Activated CD4-positive, alpha-beta memory T cell treated with anti-CD3 and anti-CD28 coated beads for 36 hours (primary cell): ENCODE measurements at regions of chr9 and their contacts with region 1.

Region 1: GRCh38 chr9:127916665-127917613 is at the start of gene ST6GALNAC4:
- DNase-seq: peak; percentile 98
- H3K4me3 Mint-ChIP-seq: peak within 1 kb of the TSS; percentile 77
- H3K27ac Mint-ChIP-seq: peak within 1 kb of the TSS; percentile 54
- H3K4me1 Mint-ChIP-seq: peaks cover 43% of the 10 kb centered on the region
- H3K27me3 Mint-ChIP-seq: no peaks in the 10 kb centered on the region
- total RNA-seq, gene ST6GALNAC4: 21.2 to 23.5 TPM

Region 2: GRCh38 chr9:127503947-127504782 is 412.8 kb before region 1 on chr9:
- CTCF ChIA-PET with region 1: interaction called, 5 read pairs
- POLR2A ChIA-PET with region 1: no interaction called
- intact Hi-C with region 1: loop called (anchors 10 kb)
- DNase-seq: peak; percentile 86
- H3K4me3 Mint-ChIP-seq: no peak overlapping the region
- H3K27ac Mint-ChIP-seq: no peak overlapping the region
- H3K4me1 Mint-ChIP-seq: no peaks in the 10 kb centered on the region
- H3K27me3 Mint-ChIP-seq: no peaks in the 10 kb centered on the region

Region 3: DNA sequence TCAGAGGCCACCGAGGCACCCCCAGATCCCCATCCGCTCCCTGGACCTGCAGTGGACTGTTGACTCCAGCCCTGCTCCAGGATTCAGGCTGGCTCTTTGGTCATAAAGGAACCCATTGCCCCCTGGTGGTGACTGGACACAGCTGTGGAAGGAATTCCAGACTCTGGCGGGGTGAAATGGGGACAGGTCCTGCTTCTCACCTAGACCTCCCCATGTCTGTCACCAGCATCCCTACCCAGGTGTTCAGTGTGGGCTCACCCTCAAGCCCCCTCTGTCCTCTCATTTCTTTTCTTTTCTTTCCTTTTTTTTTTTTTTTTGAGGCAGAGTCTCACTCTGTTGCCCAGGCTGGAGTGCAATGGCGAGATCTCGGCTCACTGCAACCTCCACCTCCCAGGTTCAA is 330.4 kb before region 1 on chr9:
- CTCF ChIA-PET with region 1: interaction called, 15 read pairs
- POLR2A ChIA-PET with region 1: no interaction called
- intact Hi-C with region 1: no loop called
- DNase-seq: peak; percentile 71
- H3K4me3 Mint-ChIP-seq: no peak overlapping the region
- H3K27ac Mint-ChIP-seq: no peak overlapping the region
- H3K4me1 Mint-ChIP-seq: peaks cover 9% of the 10 kb centered on the region
- H3K27me3 Mint-ChIP-seq: peaks cover 6% of the 10 kb centered on the region

Region 4: GRCh38 chr9:127770905-127771569 is 145.9 kb before region 1 on chr9:
- CTCF ChIA-PET with region 1: interaction called, 12 read pairs
- POLR2A ChIA-PET with region 1: no interaction called
- intact Hi-C with region 1: no loop called
- DNase-seq: peak; percentile 99
- H3K4me3 Mint-ChIP-seq: peak overlapping the region; percentile 89
- H3K27ac Mint-ChIP-seq: peak overlapping the region; percentile 85
- H3K4me1 Mint-ChIP-seq: peaks cover 56% of the 10 kb centered on the region
- H3K27me3 Mint-ChIP-seq: no peaks in the 10 kb centered on the region

Region 5: GRCh38 chr9:127930231-127931091 is 13.5 kb after region 1 on chr9 and contains the start of gene PIP5KL1:
- CTCF ChIA-PET with region 1: interaction called, 9 read pairs
- POLR2A ChIA-PET with region 1: interaction called, 6 read pairs
- intact Hi-C with region 1: loop called (anchors 1 kb)
- DNase-seq: peak; percentile 79
- H3K4me3 Mint-ChIP-seq: peak within 1 kb of the TSS; percentile 48
- H3K27ac Mint-ChIP-seq: no peak within 1 kb of the TSS
- H3K4me1 Mint-ChIP-seq: peaks cover 32% of the 10 kb centered on the region
- H3K27me3 Mint-ChIP-seq: peaks cover 1% of the 10 kb centered on the region
- total RNA-seq, gene PIP5KL1: 0.94 to 2.9 TPM

Region 6: GRCh38 chr9:128296337-128297220 is 379.6 kb after region 1 on chr9:
- CTCF ChIA-PET with region 1: no interaction called
- POLR2A ChIA-PET with region 1: no interaction called
- intact Hi-C with region 1: no loop called
- DNase-seq: no peak
- H3K4me3 Mint-ChIP-seq: no peak overlapping the region
- H3K27ac Mint-ChIP-seq: no peak overlapping the region
- H3K4me1 Mint-ChIP-seq: no peaks in the 10 kb centered on the region
- H3K27me3 Mint-ChIP-seq: no peaks in the 10 kb centered on the region